OCI-LY7 (cell line): ENCODE measurements at regions of chr5 and their contacts with region 1.

Region 1: DNA sequence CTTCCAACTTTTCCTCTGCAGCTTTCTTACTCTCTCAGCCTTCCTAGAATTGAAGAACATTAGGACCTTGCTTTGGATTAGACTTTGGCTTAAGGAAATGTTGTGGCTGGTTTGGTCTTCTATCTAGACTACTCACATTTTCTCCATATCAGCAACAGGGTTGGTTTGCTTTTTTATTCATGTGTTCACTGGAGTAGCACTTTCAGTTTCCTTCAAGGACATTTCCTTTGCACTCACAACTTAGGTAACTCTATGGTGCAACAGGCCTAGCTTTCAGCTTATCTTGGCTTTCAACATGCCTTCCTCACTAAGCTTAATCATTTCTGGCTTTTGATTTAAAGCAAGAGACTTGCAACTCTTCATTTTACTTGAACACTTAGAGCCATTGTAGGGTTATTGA is 153.1 kb downstream of the CCDC192 start:
- DNase-seq: no peak
- H3K4me3 ChIP-seq: no peak overlapping the region
- H3K27ac ChIP-seq: no peak overlapping the region
- H3K4me1 ChIP-seq: no peaks in the 10 kb centered on the region
- CTCF ChIP-seq: no peak

Region 2: GRCh38 chr5:127602481-127602880 is 253.8 kb before region 1 on chr5:
- CTCF ChIA-PET with region 1: no interaction called
- POLR2A ChIA-PET with region 1: interaction called, 11 read pairs
- intact Hi-C with region 1: no loop called
- DNase-seq: no peak
- H3K4me3 ChIP-seq: no peak overlapping the region
- H3K27ac ChIP-seq: no peak overlapping the region
- H3K4me1 ChIP-seq: no peaks in the 10 kb centered on the region
- CTCF ChIP-seq: no peak